Endothelial cell of umbilical vein (primary cell): ENCODE measurements at regions of chr20 and their contacts with region 1.

Region 1: GRCh38 chr20:51595058-51595532 is 52.6 kb upstream of the NFATC2 start:
- DNase-seq: peak; percentile 94
- H3K4me3 ChIP-seq: no peak overlapping the region
- H3K27ac ChIP-seq: peak overlapping the region; percentile 41
- H3K4me1 ChIP-seq: peaks cover 27% of the 10 kb centered on the region
- H3K27me3 ChIP-seq: no peaks in the 10 kb centered on the region
- CTCF ChIP-seq: peak; percentile 83 to 87
- POLR2A ChIP-seq: no peak

Region 2: GRCh38 chr20:51326201-51326819 is 268.8 kb before region 1 on chr20:
- CTCF ChIA-PET with region 1: interaction called, 15 read pairs
- POLR2A ChIA-PET with region 1: no interaction called
- dilution Hi-C with region 1: no loop called
- intact Hi-C with region 1: no loop called
- DNase-seq: peak; percentile 39
- H3K4me3 ChIP-seq: no peak overlapping the region
- H3K27ac ChIP-seq: no peak overlapping the region
- H3K4me1 ChIP-seq: no peaks in the 10 kb centered on the region
- H3K27me3 ChIP-seq: peaks cover 0 to 9% of the 10 kb centered on the region in 2 experiments
- CTCF ChIP-seq: peak; percentile 64 to 80
- POLR2A ChIP-seq: no peak

Region 3: DNA sequence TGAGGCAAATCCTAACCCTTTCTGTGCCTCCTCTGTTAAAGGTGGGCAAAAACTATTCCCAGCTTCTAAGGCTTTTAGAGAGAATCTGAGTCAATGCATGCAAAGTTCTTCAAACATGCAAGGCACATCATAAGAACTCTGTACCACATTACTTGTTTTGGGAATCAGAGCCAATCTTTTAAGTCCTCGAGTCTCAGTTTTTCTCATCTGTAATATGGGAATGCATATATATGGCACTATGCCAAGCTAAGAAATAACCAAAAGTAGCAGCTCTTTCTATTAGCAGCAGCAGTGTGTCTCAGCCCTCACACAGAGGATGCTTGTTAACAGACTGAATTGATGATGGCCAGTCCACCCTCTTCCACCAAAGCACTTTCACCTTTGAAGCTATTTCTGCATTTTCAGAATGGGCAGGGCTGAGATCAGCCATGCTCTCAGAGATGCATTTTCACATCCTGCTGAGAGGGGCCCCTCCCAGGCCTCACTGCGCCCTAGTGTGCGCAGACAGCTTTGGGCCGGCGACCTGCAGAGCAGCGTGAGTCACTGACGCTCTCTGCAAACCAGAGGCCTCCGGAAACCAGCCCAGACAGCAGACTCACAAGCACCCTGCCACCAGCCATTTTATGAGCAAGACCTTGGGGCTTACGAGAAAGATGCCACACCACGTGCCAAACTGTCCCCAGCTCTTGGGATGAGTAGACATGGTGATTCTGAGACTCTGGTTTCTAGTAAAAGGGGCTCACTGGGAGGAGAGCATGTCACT is 190.6 kb before region 1 on chr20:
- CTCF ChIA-PET with region 1: interaction called, 4 read pairs
- POLR2A ChIA-PET with region 1: no interaction called
- dilution Hi-C with region 1: loop called (anchors 25 kb)
- intact Hi-C with region 1: no loop called
- DNase-seq: no peak
- H3K4me3 ChIP-seq: no peak overlapping the region
- H3K27ac ChIP-seq: no peak overlapping the region
- H3K4me1 ChIP-seq: peaks cover 4% of the 10 kb centered on the region
- H3K27me3 ChIP-seq: no peaks in the 10 kb centered on the region
- CTCF ChIP-seq: no peak
- POLR2A ChIP-seq: no peak

Region 4: DNA sequence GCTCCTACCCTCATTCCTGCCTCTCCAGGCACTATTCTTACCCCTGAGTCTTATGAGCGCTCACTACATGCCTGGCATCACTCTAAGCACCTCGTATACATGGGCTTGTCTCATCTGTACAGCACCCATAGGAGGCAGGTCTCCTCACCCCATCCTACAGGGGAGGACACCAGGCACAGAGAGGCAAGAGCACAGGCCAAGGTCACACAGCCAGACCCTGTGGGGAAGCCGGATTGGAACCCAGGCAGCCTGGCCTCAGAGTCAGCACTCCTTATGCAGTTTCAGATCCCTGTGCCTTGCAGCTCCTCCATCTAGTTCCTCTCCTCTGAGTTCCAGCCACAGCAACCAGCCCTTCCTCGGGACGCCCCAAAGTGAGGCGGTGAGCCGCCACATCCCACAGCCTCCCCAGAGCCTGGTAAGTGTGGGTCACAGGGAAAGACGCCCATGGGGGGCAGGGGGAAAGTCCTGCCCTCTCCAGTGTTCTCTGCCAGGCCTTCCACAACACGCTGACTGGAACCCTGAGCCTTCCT is 155.9 kb before region 1 on chr20:
- CTCF ChIA-PET with region 1: no interaction called
- POLR2A ChIA-PET with region 1: no interaction called
- dilution Hi-C with region 1: no loop called
- intact Hi-C with region 1: no loop called
- DNase-seq: no peak
- H3K4me3 ChIP-seq: no peak overlapping the region
- H3K27ac ChIP-seq: no peak overlapping the region
- H3K4me1 ChIP-seq: no peaks in the 10 kb centered on the region
- H3K27me3 ChIP-seq: no peaks in the 10 kb centered on the region
- CTCF ChIP-seq: no peak
- POLR2A ChIP-seq: no peak

Region 5: DNA sequence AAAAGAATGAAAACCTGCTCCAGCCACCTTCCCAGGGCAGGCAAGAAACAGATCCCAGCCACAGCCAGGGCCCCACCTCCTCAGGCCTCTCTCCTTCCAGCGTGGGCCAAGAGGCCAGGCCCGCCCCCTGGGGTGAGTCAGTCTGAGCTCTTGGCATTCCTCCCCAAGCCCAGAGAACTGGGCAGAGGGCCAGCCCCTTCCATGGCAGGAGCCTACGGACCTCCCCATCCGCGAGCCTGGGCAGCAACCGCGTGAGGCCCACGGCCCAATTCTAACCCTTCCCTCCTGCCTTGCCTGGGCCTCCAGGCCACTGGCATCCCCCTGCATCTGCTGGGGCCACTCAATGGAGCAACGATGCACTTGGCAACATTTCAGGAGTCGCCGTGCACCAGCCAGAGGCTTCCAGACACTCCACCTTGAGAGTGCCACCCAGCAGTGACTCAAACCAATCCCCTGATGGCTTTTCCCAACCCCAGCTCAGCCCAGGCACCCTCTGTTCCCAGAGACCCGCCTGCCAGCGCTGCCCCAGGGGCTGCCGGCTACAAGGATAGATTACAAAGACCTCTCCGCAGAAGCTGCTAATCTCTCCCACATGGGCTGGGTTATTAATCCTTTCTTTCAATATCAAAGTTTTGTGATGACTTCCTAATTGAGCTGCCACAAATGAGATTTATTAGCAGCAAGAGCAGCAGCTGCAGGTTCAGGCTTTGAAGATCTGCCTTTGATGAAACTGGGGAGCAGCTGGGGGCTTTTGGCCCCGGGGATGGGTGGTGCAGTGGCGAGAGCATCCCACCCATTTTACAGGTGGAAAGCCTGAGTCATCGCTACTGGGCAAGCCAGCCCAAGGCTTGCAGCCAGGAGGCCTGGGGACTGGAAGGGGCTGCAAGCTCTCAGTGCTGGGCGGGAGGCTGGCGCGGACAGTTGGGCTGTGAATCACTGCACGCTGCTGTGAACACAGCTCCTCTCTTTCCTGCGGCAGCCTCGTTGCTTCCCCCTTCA is 138.3 kb before region 1 on chr20:
- CTCF ChIA-PET with region 1: interaction called, 29 read pairs
- POLR2A ChIA-PET with region 1: no interaction called
- dilution Hi-C with region 1: no loop called
- intact Hi-C with region 1: no loop called
- DNase-seq: peak; percentile 99
- H3K4me3 ChIP-seq: no peak overlapping the region
- H3K27ac ChIP-seq: peak overlapping the region; percentile 71
- H3K4me1 ChIP-seq: peaks cover 15% of the 10 kb centered on the region
- H3K27me3 ChIP-seq: no peaks in the 10 kb centered on the region
- CTCF ChIP-seq: no peak
- POLR2A ChIP-seq: no peak

Region 6: GRCh38 chr20:51541189-51542032 is 53.7 kb before region 1 on chr20:
- CTCF ChIA-PET with region 1: interaction called, 42 read pairs
- POLR2A ChIA-PET with region 1: no interaction called
- dilution Hi-C with region 1: no loop called
- intact Hi-C with region 1: loop called (anchors 2 kb)
- DNase-seq: peak; percentile 85
- H3K4me3 ChIP-seq: peak overlapping the region in 2 of 3 experiments; percentile 36 to 47
- H3K27ac ChIP-seq: peak overlapping the region; percentile 42
- H3K4me1 ChIP-seq: peaks cover 25% of the 10 kb centered on the region
- H3K27me3 ChIP-seq: no peaks in the 10 kb centered on the region
- CTCF ChIP-seq: no peak
- POLR2A ChIP-seq: no peak

Region 7: DNA sequence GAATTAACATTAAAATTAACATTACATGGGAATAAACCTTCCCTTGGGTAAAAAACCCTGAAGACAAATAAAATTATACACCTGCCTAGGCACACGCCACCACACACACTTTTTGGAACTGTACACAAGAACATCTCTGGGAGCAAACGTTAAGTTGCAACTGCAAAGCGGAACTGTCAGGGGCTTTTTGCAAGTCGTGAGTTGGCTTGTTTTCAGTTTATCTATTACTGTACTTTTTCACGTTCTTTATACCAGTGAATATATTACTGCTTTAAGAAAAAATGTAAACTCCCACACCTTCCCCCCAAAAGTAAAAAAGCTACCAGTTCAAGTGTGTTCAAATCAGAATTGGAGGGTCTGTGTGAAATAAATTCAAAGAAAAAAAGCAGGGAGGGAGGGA is 13.0 kb after region 1 on chr20:
- CTCF ChIA-PET with region 1: interaction called, 21 read pairs
- POLR2A ChIA-PET with region 1: no interaction called
- dilution Hi-C with region 1: no loop called
- intact Hi-C with region 1: no loop called
- DNase-seq: no peak
- H3K4me3 ChIP-seq: no peak overlapping the region
- H3K27ac ChIP-seq: no peak overlapping the region
- H3K4me1 ChIP-seq: no peaks in the 10 kb centered on the region
- H3K27me3 ChIP-seq: no peaks in the 10 kb centered on the region
- CTCF ChIP-seq: no peak
- POLR2A ChIP-seq: no peak